ENCODE measurements at regions of chr1 and their contacts with region 1.

Region 1: DNA sequence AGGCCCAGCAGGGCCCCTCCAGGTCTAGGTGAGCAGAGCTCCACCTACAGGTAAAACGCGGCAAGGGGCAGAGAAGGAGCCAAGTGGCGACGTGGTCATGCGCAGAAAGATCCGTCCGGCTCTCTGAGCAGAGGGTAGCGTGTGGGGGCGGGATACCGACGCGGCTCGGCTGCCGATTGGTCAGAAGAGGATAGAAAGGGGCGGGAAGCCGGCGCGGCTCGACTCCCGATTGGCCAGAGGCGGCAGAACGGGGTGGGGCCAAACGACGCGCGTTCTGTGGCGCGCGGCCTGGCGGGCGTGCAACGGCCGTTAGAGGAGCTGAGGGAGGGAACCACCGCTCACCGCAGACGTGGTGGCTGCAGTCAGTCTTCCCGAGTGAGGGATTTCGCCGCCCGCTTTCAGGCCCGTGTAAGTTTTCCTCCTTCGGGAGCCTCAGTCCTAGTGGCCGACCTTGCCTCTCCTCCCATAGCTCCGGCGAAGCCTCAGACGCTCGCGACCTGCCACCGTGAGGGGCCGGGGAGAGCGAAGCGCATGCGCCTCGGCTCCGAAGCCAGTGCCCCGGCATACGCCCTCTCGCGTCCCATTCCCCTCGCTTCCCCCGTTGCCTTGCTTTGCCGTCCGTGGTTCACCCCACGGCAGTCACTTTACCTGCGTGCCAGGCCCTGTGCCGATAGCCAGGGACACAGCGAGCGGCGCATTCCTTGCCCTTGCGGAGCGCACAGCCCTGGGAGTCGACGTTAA is at the start of gene CEP85:
- DNase-seq: peak; percentile 97 to 99
- ATAC-seq: peak; percentile 99 to 100 (median 99)
- H3K4me3 ChIP-seq: peak within 1 kb of the TSS; percentile 62 to 93 (median 72)
- H3K27ac ChIP-seq: peak within 1 kb of the TSS; percentile 69 to 94 (median 89)
- H3K4me1 ChIP-seq: peaks cover 0 to 42% (median 14%) of the 10 kb centered on the region in 9 donors
- H3K27me3 ChIP-seq: no peaks in the 10 kb centered on the region
- CTCF ChIP-seq: peak; percentile 69 to 95 (median 85)
- total RNA-seq, gene CEP85: 29.9 to 74.5 (median 53.8) TPM

Region 2: DNA sequence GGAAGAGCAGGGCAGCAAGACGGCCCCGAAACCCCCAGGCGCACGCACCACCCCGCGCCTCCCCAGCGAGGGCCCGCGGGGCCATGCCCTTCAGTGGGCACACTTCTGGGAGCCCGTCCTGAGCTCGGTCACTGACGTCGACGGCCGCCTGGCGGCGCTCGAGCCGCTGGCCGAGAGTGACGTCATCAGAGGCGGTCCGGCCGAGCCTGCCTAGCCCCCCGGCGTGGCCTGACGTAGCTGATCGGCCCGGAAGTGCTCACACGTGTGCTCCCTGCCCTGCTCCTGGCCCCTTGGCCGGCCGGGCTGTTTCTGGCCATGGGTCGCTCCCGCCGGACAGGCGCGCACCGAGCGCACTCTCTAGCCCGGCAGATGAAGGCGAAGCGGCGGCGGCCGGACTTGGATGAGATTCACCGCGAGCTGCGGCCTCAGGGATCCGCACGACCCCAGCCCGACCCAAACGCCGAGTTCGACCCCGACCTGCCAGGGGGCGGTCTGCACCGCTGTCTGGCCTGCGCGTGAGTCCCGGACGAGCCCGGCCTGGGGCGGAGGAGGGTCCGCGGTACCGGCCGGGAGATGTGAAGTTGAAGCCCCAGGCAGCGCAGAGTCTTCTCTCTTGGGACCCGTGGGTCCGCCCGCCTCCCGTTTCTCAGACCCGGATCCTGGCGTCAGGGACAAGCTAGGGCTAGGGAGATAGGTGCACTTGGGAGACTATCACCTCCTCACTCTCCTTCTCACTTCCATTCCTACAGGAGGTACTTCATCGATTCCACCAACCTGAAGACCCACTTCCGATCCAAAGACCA is 64.2 kb before region 1 on chr1 and contains the start of gene ZNF593:
- intact Hi-C with region 1: loop called in 8 of 10 experiments (anchors 2 to 10 kb)
- DNase-seq: peak; percentile 92 to 94
- ATAC-seq: peak; percentile 96 to 98 (median 97)
- H3K4me3 ChIP-seq: peak within 1 kb of the TSS; percentile 63 to 100 (median 88)
- H3K27ac ChIP-seq: peak within 1 kb of the TSS in 9 of 10 donors; percentile 79 to 89 (median 82)
- H3K4me1 ChIP-seq: peaks cover 5 to 33% (median 16%) of the 10 kb centered on the region in 9 donors
- H3K27me3 ChIP-seq: no peaks in the 10 kb centered on the region
- CTCF ChIP-seq: peak; percentile 80 to 97 (median 91)
- total RNA-seq, gene ZNF593: 10.7 to 26.0 (median 18.3) TPM

Region 3: DNA sequence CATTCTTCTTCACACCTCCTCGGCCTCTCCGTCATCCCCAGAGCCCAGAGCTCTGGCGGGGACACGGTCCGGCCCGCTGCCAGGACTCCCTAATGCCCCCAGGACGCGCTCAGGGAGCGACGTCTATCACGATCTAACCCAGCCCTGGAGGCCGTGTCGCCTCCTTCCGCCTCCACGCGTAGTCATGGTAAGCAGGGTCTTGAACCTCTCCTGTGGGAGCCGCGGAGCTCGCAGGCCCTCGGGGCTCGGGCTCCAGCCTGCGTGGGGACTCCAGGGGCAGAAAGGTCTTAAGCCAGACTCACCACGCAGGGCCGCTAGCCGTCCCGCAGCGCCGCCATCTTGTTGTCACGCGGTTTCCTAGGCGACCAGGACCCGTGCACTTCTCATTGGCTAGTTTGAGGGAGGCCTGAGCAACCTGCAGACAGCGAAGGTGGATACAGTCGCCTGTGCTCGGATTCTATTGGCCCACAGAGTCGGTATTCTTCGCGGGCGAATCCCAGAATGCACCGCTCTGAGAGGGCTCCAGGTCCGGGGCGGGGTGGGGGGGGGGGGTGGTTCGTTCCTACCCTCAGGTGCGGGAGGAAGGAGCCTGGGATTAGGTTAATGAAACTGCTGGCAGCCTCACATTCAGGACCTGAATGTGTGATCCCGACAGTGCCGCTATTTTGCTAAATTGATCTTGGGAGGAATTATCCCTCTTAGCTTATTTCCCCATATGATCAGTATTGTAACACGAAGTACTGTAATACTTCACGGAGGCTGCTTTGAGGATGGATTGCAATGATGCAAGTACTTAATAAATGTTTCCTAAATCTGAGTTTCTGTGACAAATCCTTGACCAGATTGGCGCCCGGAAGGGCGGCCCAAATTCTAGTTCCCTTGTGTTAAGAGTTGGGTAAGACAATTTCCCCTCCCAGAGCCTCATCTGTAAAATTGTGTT is 72.5 kb after region 1 on chr1 and contains the start of gene UBXN11:
- intact Hi-C with region 1: loop called in 1 of 10 experiments (anchors 1 kb)
- DNase-seq: peak; percentile 85 to 92
- ATAC-seq: peak; percentile 93 to 98 (median 96)
- H3K4me3 ChIP-seq: peak within 1 kb of the TSS; percentile 56 to 78 (median 64)
- H3K27ac ChIP-seq: peak within 1 kb of the TSS in 8 of 10 donors; percentile 11 to 88 (median 54)
- H3K4me1 ChIP-seq: peaks cover 6 to 64% (median 24%) of the 10 kb centered on the region in 9 donors
- H3K27me3 ChIP-seq: no peaks in the 10 kb centered on the region
- CTCF ChIP-seq: no peak
- total RNA-seq, gene UBXN11: 5.4 to 14.1 (median 7.1) TPM

Measured in heart right ventricle (tissue), 16 donors.